Activated CD4-positive, alpha-beta T cell treated with anti-CD3 and anti-CD28 coated beads for 36 hours (primary cell): ENCODE measurements at regions of chr7 and their contacts with region 1.

Region 1: GRCh38 chr7:27576360-27576944 is 86.2 kb downstream of the HIBADH start:
- DNase-seq: no peak
- ATAC-seq: no peak
- H3K4me3 Mint-ChIP-seq: no peak overlapping the region
- H3K27ac Mint-ChIP-seq: no peak overlapping the region
- H3K4me1 Mint-ChIP-seq: no peaks in the 10 kb centered on the region
- H3K27me3 Mint-ChIP-seq: no peaks in the 10 kb centered on the region

Region 2: DNA sequence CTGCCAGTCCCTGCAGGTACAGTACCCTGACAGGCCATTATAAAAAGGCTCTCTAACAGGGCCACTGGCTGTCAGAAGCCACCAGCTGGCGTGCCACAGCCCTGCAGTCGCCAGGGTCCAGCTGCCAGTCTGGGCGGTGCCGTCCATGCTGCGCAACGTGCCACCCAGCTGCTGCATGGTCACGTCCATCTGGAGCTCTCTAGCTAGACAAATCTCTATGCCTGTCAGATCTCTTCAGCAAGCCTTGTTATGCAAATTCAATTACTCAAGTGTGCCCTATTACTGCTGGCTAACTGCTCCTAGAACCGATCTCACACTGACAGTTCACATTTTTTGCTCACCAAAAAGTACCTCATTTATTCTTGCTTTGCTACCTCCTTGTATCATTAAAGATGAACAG is 10.4 kb after region 1 on chr7:
- CTCF ChIA-PET with region 1: interaction called, 10 read pairs
- POLR2A ChIA-PET with region 1: interaction called, 3 read pairs
- intact Hi-C with region 1: no loop called
- DNase-seq: no peak
- ATAC-seq: no peak
- H3K4me3 Mint-ChIP-seq: no peak overlapping the region
- H3K27ac Mint-ChIP-seq: no peak overlapping the region
- H3K4me1 Mint-ChIP-seq: no peaks in the 10 kb centered on the region
- H3K27me3 Mint-ChIP-seq: no peaks in the 10 kb centered on the region